Panc1 (cell line): ENCODE measurements at regions of chr14 and their contacts with region 1.

Region 1: DNA sequence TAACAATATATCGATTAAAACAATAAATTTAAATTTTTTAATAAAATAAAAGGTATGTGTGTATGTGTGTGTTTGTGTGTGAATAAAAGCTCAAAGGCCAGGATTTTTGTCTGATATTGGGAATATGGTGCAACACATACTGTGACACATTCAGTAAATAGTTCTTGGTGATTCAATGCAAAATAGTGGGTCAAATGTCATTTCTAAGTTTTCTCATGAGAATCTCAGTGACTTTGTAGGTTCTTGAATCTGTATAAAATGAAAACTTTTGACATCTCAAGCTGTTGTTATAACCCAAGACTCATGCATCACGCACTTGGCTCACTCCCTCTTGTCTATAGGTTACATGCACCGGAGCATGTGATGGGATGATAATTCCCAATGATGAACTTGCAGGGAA is 16.2 kb upstream of the MED6 start:
- DNase-seq: no peak
- ATAC-seq: no peak
- H3K4me3 ChIP-seq: no peak overlapping the region
- H3K27ac ChIP-seq: no peak overlapping the region
- H3K4me1 ChIP-seq: no peaks in the 10 kb centered on the region
- H3K27me3 ChIP-seq: peaks cover 8% of the 10 kb centered on the region
- CTCF ChIP-seq: no peak

Region 2: DNA sequence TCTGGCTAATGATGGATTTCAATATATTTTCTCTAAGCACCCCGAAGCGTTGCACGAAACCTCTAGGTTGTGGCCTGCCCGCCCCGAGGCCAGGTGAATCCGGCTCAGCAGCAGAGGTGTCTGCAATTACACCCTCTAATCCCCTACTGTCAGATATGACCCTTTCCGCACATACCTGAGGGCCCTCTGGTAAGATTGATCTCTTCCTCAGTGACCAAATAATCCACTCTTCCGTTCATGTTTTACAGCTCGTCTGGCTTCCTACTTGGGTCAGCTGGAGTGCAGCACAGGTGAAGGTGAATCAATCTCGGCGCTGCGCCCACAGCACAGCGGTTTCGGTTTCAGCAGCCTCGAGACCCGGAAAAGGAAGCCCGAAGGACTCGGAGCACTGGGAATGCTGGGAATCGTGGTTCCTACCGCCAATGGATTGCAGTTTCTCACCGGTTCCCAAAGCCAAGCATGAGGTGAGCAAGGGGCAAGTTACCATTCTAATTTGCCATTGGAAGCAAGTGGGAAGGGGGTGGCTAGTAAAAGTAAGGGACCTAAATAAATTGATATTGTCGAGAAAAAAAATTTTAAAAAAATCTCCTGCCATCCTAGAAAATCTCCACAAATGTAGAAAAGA is 199.8 kb before region 1 on chr14 and contains the start of gene SYNJ2BP:
- CTCF ChIA-PET with region 1: no interaction called
- POLR2A ChIA-PET with region 1: no interaction called
- in situ Hi-C with region 1: no loop called
- intact Hi-C with region 1: no loop called
- DNase-seq: peak; percentile 30
- ATAC-seq: peak; percentile 100
- H3K4me3 ChIP-seq: peak within 1 kb of the TSS; percentile 94
- H3K27ac ChIP-seq: peak within 1 kb of the TSS; percentile 89
- H3K4me1 ChIP-seq: no peaks in the 10 kb centered on the region
- H3K27me3 ChIP-seq: no peaks in the 10 kb centered on the region
- CTCF ChIP-seq: no peak
- total RNA-seq, gene SYNJ2BP: 13.6 TPM

Region 3: DNA sequence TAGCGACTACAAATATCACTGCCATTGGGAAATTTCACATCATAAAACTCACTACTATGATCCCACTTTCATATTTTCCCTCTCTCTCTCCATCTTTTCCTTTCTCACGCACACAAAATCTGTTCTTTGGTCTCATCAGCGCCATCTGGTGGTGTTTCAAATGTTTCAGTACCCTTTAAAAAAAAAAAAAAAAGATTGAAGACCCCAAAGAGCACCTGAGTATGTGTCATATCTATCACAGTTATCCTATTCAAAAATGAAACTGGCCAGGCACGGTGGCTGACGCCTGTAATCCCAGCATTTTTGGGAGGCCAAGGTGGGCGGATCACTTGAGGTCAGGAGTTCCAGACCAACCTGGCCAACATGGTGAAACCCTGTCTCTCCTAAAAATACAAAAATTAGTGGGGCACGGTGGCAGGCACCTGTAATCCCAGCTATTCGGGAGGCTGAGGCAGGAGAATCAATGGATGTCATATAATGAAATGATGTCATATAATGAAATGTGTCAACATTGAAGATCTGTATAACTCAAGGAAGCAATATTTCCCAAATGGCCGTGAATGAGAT is 97.5 kb after region 1 on chr14:
- CTCF ChIA-PET with region 1: no interaction called
- POLR2A ChIA-PET with region 1: no interaction called
- in situ Hi-C with region 1: no loop called
- intact Hi-C with region 1: loop called (anchors 5 kb)
- DNase-seq: peak; percentile 13
- ATAC-seq: no peak
- H3K4me3 ChIP-seq: no peak overlapping the region
- H3K27ac ChIP-seq: no peak overlapping the region
- H3K4me1 ChIP-seq: no peaks in the 10 kb centered on the region
- H3K27me3 ChIP-seq: no peaks in the 10 kb centered on the region
- CTCF ChIP-seq: peak; percentile 69